ENCODE measurements at regions of chr4 and their contacts with region 1.

Region 1: DNA sequence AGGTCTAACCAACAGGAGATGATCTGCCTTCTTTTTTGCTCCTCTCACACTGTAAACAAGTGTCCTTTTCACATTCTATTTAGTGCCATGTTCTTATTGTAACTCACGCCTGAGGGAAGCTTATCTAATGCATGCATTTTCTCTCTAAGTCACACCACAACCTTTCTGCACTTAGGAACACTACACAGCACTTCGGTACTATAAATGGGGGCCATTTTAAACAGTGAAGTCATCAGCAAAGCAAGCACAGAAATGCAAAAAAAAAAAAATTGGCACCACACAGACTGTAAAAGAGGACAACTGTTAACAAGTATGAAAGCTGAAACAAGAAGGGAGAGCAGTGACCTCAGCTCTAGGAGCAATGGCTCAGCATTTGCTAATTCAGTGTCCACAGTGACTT is 45.2 kb downstream of the PRSS12 start:
- DNase-seq: no peak

Region 2: DNA sequence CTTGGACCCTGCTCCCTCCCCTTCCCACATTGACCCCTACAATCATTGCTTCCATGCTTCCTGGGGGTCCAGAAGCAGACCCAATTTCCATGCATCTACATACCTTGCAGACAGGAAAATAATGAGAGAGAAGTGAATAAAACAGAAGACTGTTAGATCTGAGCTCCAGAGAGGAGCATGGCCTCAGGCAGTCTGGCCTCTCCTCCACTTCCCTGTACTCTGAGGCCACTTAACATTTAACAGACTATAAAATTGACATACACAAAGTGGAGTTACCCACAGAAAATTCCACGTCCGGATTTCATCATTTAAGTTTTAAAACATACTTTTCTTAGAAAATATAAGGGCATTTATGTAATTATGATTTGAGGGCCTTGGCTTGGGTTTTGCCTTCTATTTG is 47.3 kb after region 1 on chr4:
- intact Hi-C with region 1: loop called in 1 of 2 experiments (anchors 1 kb)
- DNase-seq: no peak

Region 3: GRCh38 chr4:118865091-118865708 is 557.6 kb after region 1 on chr4:
- intact Hi-C with region 1: no loop called
- DNase-seq: no peak